Astrocyte of the cerebellum (primary cell): ENCODE measurements at regions of chr3 and their contacts with region 1.

Region 1: GRCh38 chr3:58008140-58009025 is at the start of gene FLNB:
- DNase-seq: no peak
- H3K4me3 ChIP-seq: peak within 1 kb of the TSS; percentile 78
- CTCF ChIP-seq: peak; percentile 76

Region 2: GRCh38 chr3:58167431-58168351 is 159.3 kb after region 1 on chr3:
- in situ Hi-C with region 1: loop called (anchors 25 kb)
- DNase-seq: no peak
- H3K4me3 ChIP-seq: no peak overlapping the region
- CTCF ChIP-seq: peak; percentile 97